Activated CD4-positive, alpha-beta T cell treated with anti-CD3 and anti-CD28 coated beads for 36 hours (primary cell): ENCODE measurements at regions of chr19 and their contacts with region 1.

Region 1: DNA sequence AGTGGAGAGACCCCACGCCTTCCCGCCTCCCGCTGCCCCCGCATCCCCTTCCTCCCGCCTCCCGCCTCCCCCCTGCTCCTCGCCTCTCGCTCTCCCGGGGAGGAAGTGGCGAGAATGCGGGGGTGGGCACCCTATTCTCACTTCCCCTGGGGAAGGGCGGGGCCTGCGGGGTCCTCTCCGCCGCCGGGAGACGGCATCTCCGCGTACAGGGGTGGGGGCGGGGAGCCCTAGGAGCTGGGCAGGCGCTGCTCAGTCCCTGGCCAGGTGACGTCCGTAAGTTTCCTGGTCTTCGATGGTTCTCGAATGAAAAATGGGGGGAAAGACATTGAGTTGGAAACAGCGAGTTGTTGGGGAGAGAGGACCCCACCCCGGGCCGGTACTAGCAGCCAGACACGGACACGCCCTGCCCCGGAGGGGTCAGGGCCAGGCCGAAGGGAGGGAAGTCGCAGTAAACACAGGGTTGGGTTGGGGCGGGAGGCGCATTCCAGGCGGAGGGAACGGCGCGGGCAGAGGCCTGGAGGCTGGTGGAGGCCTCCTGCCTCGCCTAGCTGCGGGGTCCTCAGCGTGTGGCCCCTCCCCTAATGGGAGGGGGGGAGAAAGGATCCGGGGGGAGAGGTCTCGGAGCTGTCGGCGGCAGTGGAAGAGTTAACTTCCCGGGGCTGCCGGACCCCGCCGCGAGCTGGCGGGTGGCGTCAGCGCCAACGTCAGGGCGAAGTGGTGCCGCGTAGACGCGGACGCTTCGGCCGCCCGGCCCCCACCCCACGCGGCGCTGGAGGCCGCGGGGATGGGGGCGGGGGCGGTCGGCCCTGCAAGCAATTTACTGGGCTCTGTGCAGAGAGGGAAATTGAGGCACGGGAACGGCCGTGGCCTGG is 10.4 kb upstream of the JUND start:
- DNase-seq: peak; percentile 96
- ATAC-seq: peak; percentile 38
- H3K4me3 Mint-ChIP-seq: peak overlapping the region; percentile 87
- H3K27ac Mint-ChIP-seq: peak overlapping the region; percentile 99
- H3K4me1 Mint-ChIP-seq: peaks cover 63% of the 10 kb centered on the region
- H3K27me3 Mint-ChIP-seq: no peaks in the 10 kb centered on the region

Region 2: GRCh38 chr19:18091217-18091608 is 200.6 kb before region 1 on chr19:
- CTCF ChIA-PET with region 1: no interaction called
- POLR2A ChIA-PET with region 1: no interaction called
- intact Hi-C with region 1: loop called in 1 of 2 experiments (anchors 5 kb)
- DNase-seq: peak; percentile 92
- ATAC-seq: peak; percentile 73
- H3K4me3 Mint-ChIP-seq: peak overlapping the region; percentile 57
- H3K27ac Mint-ChIP-seq: peak overlapping the region; percentile 99
- H3K4me1 Mint-ChIP-seq: peaks cover 63% of the 10 kb centered on the region
- H3K27me3 Mint-ChIP-seq: no peaks in the 10 kb centered on the region

Region 3: DNA sequence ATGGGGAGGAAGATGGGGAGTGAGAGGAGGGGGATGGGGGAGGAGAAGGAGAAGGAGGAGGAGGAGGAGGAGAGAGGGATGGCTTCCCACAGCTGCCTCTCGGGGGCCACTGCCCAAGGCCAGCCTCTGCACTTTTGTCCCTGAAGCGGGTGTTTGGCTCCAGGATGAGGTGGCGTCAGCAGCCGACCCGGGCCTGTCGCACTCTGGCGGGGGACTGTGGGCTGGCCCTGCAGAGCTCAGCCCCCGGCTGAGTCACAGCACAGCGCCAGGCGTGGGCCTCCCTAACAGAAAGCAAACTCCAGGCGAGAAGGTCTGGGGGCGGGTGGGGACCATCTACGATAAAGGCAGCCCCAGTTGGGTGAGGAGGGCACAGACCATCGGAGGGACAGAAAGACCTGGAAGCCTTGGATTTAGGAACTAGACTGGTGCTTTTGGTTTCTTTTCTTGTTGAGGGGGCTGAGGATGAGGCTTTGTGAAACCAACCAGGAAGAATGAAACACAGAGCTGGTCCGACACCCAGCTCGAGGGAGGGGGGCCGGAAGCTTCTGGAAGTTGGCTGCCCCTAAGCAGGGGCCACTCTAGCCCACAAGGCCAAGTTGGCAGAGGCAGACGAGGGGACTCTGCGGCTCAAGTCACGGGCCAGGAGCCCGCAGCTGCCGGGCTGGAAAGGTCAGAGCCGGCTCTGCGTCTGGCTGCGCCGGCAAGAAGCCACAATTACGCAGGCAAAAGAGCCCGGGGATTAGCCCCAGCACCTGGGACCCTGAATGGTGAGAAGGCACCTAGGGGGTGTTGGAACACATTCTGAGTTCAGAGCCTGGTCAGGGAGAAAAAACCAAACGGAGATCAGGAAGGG is 12.9 kb after region 1 on chr19:
- CTCF ChIA-PET with region 1: interaction called, 11 read pairs
- POLR2A ChIA-PET with region 1: interaction called, 32 read pairs
- intact Hi-C with region 1: loop called (anchors 1 kb)
- DNase-seq: peak; percentile 93
- ATAC-seq: peak; percentile 81
- H3K4me3 Mint-ChIP-seq: peak overlapping the region; percentile 84
- H3K27ac Mint-ChIP-seq: peak overlapping the region; percentile 97
- H3K4me1 Mint-ChIP-seq: peaks cover 50% of the 10 kb centered on the region
- H3K27me3 Mint-ChIP-seq: no peaks in the 10 kb centered on the region

Region 4: GRCh38 chr19:18503971-18504885 is 212.4 kb after region 1 on chr19:
- CTCF ChIA-PET with region 1: no interaction called
- POLR2A ChIA-PET with region 1: no interaction called
- intact Hi-C with region 1: no loop called
- DNase-seq: no peak
- ATAC-seq: peak; percentile 22
- H3K4me3 Mint-ChIP-seq: no peak overlapping the region
- H3K27ac Mint-ChIP-seq: peak overlapping the region; percentile 72
- H3K4me1 Mint-ChIP-seq: peaks cover 87% of the 10 kb centered on the region
- H3K27me3 Mint-ChIP-seq: no peaks in the 10 kb centered on the region